A673 (cell line): ENCODE measurements at regions of chr11 and their contacts with region 1.

Region 1: GRCh38 chr11:89613911-89614310 is 96.2 kb upstream of the TRIM77 start:
- DNase-seq: no peak
- H3K4me3 ChIP-seq: no peak overlapping the region
- H3K27ac ChIP-seq: no peak overlapping the region
- H3K4me1 ChIP-seq: no peaks in the 10 kb centered on the region
- H3K27me3 ChIP-seq: no peaks in the 10 kb centered on the region
- CTCF ChIP-seq: no peak

Region 2: GRCh38 chr11:89203814-89204213 is 410.1 kb before region 1 on chr11:
- CTCF ChIA-PET with region 1: no interaction called
- POLR2A ChIA-PET with region 1: no interaction called
- intact Hi-C with region 1: loop called (anchors 5 kb)
- DNase-seq: no peak
- H3K4me3 ChIP-seq: no peak overlapping the region
- H3K27ac ChIP-seq: no peak overlapping the region
- H3K4me1 ChIP-seq: no peaks in the 10 kb centered on the region
- H3K27me3 ChIP-seq: no peaks in the 10 kb centered on the region
- CTCF ChIP-seq: no peak

Region 3: GRCh38 chr11:89327885-89328284 is 286.0 kb before region 1 on chr11:
- CTCF ChIA-PET with region 1: no interaction called
- POLR2A ChIA-PET with region 1: no interaction called
- intact Hi-C with region 1: loop called (anchors 5 kb)
- DNase-seq: no peak
- H3K4me3 ChIP-seq: no peak overlapping the region
- H3K27ac ChIP-seq: no peak overlapping the region
- H3K4me1 ChIP-seq: no peaks in the 10 kb centered on the region
- H3K27me3 ChIP-seq: no peaks in the 10 kb centered on the region
- CTCF ChIP-seq: no peak

Region 4: DNA sequence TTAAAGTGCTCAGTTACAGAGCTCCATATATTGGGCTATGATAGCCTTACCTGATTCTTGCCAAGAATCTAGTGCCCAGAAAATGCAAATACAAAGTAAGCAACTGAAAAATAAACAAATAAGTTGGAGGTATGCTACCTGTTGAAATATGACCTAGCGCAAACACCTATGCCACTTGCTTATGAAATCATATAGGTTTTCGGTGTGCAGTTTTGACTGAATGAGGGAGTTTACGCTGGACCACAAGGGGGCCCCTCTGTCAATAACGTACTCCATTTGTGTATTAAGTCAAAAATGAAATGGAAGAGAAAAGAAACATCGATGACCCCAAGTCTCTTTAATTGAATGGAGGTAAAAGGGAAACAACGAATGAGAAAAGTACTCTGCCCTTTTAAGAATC is 11.3 kb after region 1 on chr11:
- CTCF ChIA-PET with region 1: no interaction called
- POLR2A ChIA-PET with region 1: no interaction called
- intact Hi-C with region 1: no loop called
- DNase-seq: peak; percentile 18
- H3K4me3 ChIP-seq: no peak overlapping the region
- H3K27ac ChIP-seq: no peak overlapping the region
- H3K4me1 ChIP-seq: no peaks in the 10 kb centered on the region
- H3K27me3 ChIP-seq: no peaks in the 10 kb centered on the region
- CTCF ChIP-seq: peak; percentile 60